Endothelial cell of umbilical vein (primary cell): ENCODE measurements at regions of chr2 and their contacts with region 1.

Region 1: GRCh38 chr2:74507145-74507925 is at the start of gene PCGF1:
- DNase-seq: peak; percentile 98
- H3K4me3 ChIP-seq: peak within 1 kb of the TSS; percentile 3 to 75 (median 37)
- H3K27ac ChIP-seq: peak within 1 kb of the TSS; percentile 54
- H3K4me1 ChIP-seq: peaks cover 27% of the 10 kb centered on the region
- H3K27me3 ChIP-seq: peaks cover 31 to 40% of the 10 kb centered on the region in 2 experiments
- CTCF ChIP-seq: peak; percentile 41 to 81
- POLR2A ChIP-seq: peak; percentile 75
- total RNA-seq, gene PCGF1: 17.4 and 21.0 TPM in 2 replicates

Region 2: DNA sequence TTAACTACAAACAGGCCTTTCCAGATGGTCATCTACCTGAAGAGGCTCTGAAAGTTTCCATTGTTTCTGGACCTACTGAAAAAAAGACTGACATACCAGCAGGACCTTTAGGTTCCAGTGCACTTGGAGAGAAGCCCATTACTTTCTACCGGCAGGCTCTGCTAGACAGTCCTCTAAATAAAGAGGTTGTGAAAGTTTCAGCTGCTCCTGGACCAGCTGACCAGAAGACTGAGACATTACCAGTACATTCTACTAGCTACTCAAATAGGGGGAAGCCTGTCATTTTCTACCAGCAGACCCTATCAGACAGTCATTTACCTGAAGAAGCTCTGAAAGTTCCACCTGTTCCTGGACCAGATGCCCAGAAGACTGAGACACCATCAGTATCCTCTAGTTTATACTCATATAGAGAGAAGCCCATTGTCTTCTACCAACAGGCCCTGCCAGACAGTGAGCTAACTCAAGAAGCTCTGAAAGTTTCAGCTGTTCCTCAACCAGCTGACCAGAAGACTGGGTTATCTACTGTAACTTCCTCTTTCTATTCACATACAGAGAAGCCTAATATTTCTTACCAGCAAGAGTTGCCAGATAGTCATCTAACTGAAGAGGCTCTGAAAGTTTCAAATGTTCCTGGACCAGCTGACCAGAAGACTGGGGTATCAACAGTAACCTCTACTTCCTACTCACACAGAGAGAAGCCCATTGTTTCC is 1055.9 kb before region 1 on chr2:
- CTCF ChIA-PET with region 1: no interaction called
- POLR2A ChIA-PET with region 1: no interaction called
- dilution Hi-C with region 1: no loop called
- intact Hi-C with region 1: no loop called
- DNase-seq: no peak
- H3K4me3 ChIP-seq: no peak overlapping the region
- H3K27ac ChIP-seq: no peak overlapping the region
- H3K4me1 ChIP-seq: no peaks in the 10 kb centered on the region
- H3K27me3 ChIP-seq: no peaks in the 10 kb centered on the region
- CTCF ChIP-seq: no peak
- POLR2A ChIP-seq: no peak

Region 3: DNA sequence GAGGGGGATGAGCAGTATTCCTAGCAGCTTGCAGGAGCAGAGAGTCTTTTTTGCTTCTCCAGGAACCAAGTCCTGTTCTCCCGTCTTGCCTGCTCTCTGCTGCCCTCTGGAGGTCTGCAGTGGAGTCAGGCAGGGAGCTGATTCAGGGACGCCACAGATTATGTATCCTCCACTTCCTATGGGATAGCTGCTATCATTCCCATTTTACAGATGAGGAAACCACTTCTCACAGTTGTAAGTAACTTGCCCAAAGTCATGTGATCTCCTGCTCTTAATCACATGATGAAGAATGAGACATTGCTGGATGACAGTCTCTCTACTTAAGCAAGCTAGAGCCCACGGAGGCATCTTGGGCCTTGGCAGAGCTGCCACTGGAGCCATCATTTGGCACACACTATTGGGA is 172.4 kb before region 1 on chr2:
- CTCF ChIA-PET with region 1: no interaction called
- POLR2A ChIA-PET with region 1: no interaction called
- dilution Hi-C with region 1: no loop called
- intact Hi-C with region 1: no loop called
- DNase-seq: peak; percentile 70
- H3K4me3 ChIP-seq: no peak overlapping the region
- H3K27ac ChIP-seq: no peak overlapping the region
- H3K4me1 ChIP-seq: no peaks in the 10 kb centered on the region
- H3K27me3 ChIP-seq: peaks cover 0 to 2% of the 10 kb centered on the region in 2 experiments
- CTCF ChIP-seq: peak; percentile 88 to 95
- POLR2A ChIP-seq: no peak

Region 4: GRCh38 chr2:74553892-74554645 is 46.7 kb after region 1 on chr2 and contains the start of gene LOXL3:
- CTCF ChIA-PET with region 1: interaction called, 3 read pairs
- POLR2A ChIA-PET with region 1: interaction called, 8 read pairs
- dilution Hi-C with region 1: no loop called
- intact Hi-C with region 1: loop called (anchors 2 kb)
- DNase-seq: peak; percentile 69
- H3K4me3 ChIP-seq: peak within 1 kb of the TSS; percentile 77 to 84 (median 79)
- H3K27ac ChIP-seq: peak within 1 kb of the TSS; percentile 47
- H3K4me1 ChIP-seq: peaks cover 10% of the 10 kb centered on the region
- H3K27me3 ChIP-seq: no peaks in the 10 kb centered on the region
- CTCF ChIP-seq: no peak
- POLR2A ChIP-seq: no peak
- total RNA-seq, gene LOXL3: 0.95 and 0.97 TPM in 2 replicates

Region 5: DNA sequence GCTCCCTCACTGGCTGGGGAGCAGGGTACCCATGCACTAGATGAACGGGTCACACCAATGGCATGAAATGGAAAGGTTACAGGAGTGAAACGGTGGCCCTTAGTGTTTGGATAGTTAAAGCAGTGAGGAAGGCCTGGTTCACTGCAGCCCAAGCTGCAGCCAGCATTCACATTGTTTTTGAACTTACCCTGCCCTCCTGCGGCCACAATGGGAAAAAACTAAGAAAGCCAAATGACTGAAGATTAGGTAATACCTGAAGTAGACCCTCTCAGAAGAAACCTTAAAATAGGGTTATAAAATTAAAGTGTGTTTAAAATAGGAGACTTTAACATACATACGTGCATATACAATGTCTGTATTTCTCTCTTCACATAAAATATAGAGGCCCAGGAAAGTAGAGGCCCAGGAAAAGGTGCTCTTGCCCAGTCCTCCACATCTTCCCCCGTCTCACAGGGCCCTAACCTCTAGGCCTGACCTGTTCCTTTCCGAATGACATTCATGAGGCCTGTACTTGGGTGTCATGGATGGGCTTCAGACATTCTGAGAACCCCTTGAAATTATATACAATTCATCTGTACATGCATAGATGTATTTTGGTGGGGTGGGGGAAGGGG is 80.4 kb after region 1 on chr2:
- CTCF ChIA-PET with region 1: interaction called, 5 read pairs
- POLR2A ChIA-PET with region 1: interaction called, 3 read pairs
- dilution Hi-C with region 1: no loop called
- intact Hi-C with region 1: loop called (anchors 1 kb)
- DNase-seq: peak; percentile 73
- H3K4me3 ChIP-seq: no peak overlapping the region
- H3K27ac ChIP-seq: no peak overlapping the region
- H3K4me1 ChIP-seq: no peaks in the 10 kb centered on the region
- H3K27me3 ChIP-seq: peaks cover 21 to 38% of the 10 kb centered on the region in 2 experiments
- CTCF ChIP-seq: peak; percentile 51 to 54
- POLR2A ChIP-seq: no peak

Region 6: GRCh38 chr2:74653985-74654882 is 146.9 kb after region 1 on chr2 and contains the start of gene SEMA4F:
- CTCF ChIA-PET with region 1: no interaction called
- POLR2A ChIA-PET with region 1: no interaction called
- dilution Hi-C with region 1: no loop called
- intact Hi-C with region 1: loop called (anchors 5 kb)
- DNase-seq: peak; percentile 93
- H3K4me3 ChIP-seq: peak within 1 kb of the TSS; percentile 55 to 69 (median 57)
- H3K27ac ChIP-seq: no peak within 1 kb of the TSS
- H3K4me1 ChIP-seq: peaks cover 8% of the 10 kb centered on the region
- H3K27me3 ChIP-seq: no peaks in the 10 kb centered on the region
- CTCF ChIP-seq: no peak
- POLR2A ChIP-seq: no peak
- total RNA-seq, gene SEMA4F: 5.9 and 6.0 TPM in 2 replicates

Region 7: DNA sequence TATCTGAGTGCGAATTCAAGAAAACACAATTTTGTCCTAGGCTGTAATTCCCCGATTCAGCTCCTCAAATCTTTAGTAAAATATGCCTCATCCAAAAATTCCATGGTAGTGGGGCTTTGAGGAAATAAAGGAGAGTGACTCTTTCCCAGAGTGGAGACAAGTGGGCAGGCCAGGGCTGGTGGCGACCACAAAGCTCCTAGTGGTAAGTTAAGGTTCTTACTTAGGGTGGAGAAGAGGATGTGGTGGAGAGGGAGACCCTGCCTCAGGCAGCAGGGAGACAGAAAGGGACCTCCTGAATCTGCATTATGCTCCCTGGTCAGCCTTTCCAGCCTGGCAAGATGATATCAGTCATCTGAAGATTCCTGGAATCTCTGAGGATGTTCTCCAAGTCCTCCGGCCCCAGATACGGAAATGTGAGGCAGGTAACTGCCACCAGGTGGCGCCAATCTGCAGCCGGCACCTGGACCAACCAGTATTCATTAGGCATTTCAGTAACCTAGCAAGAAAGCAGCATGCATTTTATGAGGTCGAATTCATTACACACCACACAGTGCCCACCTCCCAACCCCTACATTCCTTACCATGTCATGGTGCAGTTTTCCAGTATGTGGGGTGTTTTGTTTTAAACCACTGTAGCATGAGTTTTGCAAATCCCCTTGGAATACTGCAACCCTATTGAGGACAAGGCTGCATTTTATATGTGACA is 557.5 kb after region 1 on chr2:
- CTCF ChIA-PET with region 1: no interaction called
- POLR2A ChIA-PET with region 1: no interaction called
- dilution Hi-C with region 1: no loop called
- intact Hi-C with region 1: no loop called
- DNase-seq: peak; percentile 66
- H3K4me3 ChIP-seq: no peak overlapping the region
- H3K27ac ChIP-seq: no peak overlapping the region
- H3K4me1 ChIP-seq: no peaks in the 10 kb centered on the region
- H3K27me3 ChIP-seq: no peaks in the 10 kb centered on the region
- CTCF ChIP-seq: peak; percentile 88 to 91
- POLR2A ChIP-seq: no peak